Prostate gland (tissue), 2 donors: ENCODE measurements at regions of chr16 and their contacts with region 1.

Region 1: DNA sequence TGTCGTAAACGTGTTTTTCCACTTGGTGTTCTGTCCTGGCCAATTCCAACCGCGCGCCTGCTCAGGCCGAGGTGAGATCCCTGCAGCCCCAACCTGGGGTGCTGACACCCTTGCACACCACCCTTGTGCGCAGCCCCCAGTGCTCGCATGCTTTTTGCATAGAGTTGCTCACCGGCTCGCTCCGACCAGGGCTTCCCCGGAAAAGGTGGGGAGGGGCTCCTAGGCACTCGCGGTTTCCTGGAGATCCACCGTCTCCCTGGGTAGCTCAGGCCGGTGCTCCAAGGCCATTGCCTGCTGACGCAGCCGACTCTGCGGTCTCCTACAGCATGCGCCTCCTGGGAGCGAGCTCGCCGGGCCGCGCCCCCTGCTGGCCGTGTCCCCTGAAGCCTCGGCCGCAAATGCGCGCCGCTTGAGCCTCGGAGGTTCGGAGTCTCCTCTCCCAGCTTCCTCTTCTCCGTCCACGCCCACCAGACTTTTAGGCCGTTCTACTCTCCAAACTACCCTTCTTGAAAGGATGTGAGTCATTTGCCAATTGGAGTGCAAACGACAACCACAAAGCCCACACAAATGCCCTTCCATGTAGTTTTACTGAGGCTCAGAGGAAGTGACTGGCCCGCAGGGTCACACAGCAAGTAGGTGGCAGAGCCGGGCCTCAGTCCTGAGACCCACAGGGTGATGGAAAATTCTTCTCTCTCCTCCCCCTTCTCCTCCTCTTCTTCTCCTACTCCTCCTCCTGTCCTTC is 7.2 kb upstream of the PDP2 start:
- DNase-seq: peak; percentile 74
- H3K4me3 ChIP-seq: peak overlapping the region; percentile 20 to 22
- H3K27ac ChIP-seq: peak overlapping the region in 1 of 2 donors; percentile 33
- H3K4me1 ChIP-seq: no peaks in the 10 kb centered on the region
- H3K27me3 ChIP-seq: no peaks in the 10 kb centered on the region
- CTCF ChIP-seq: peak; percentile 82 to 93 (median 87)
- POLR2A ChIP-seq: no peak

Region 2: DNA sequence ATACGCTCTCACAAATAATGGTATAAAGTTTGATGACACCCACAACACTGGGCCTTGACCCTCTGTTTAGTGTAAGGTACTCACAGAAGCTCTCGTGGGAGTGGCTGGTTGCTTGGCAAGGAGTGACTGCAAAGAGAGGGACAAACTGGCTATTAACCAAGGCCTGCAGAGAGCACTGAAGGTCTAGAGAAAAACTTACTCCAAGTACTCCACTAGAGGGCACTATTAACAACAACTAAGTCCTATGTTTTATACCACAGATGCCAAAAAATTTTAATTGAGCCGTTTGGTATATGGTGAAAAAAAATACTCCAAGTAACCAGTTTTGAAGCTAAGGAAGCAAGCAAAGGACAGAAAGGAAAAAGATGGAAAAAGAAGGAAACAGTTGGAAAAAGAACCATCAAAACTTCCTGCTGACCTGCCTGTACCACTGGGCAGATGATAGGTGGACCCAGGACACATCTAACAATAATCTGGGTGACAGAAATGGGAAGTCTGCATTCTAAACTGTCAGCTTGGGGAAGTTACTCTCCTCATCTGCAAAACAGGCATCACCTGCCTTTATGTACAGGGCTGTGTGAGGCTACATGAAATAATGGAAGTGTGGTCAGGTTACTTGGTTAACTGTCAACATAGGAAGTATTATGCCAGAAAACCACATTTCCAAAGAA is 144.9 kb before region 1 on chr16:
- intact Hi-C with region 1: loop called (anchors 2 kb)
- DNase-seq: peak; percentile 39
- H3K4me3 ChIP-seq: no peak overlapping the region
- H3K27ac ChIP-seq: peak overlapping the region in 1 of 2 donors; percentile 3
- H3K4me1 ChIP-seq: no peaks in the 10 kb centered on the region
- H3K27me3 ChIP-seq: no peaks in the 10 kb centered on the region
- CTCF ChIP-seq: peak; percentile 36 to 84 (median 74)
- POLR2A ChIP-seq: no peak

Region 3: DNA sequence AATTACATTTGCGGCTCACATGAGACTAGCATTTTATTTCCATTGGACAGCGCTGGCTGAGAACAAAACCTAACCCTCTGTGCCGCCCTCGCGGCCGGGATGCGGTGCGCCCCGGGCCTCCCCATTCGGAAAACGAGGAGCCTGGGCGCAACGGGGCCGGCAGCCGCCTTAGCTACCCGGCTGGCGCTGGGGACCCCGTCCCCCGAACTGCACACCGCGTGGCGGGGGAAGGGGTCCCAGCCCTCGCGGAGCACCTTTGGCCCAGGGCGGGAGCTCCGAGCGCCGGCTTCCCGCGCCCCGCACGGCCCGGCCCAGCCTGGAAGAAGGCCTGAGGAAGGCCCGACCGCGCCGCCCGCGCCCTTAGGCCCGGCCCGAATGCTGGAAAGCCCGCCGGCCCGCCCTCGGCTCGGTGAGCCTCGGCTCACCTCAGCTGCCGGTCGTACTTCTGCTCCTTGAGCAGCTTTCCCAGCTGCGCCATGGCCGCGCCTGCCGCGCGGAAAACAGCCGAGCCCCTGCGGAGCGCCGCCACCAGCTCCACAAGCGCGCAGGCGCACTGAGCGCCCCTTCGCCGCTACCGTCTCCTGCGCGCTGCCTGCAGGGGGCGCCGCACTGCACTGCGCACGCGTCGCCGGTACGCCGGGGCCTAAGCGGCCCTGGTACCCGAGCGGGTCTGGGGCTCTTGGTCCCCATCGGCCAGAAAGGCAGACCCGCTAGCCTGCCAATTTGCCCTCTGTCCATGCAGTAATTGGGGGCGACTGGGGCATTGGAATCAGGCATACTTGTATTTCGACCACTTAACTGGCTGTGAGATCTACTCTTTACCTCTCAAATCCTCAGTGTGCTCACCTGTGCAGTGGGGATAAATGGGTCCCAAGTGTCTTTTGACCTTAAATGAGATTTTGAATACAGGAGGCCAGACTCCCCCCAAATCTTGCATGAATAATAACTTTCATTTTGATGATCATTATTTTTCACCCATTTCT is 42.4 kb before region 1 on chr16 and contains the start of gene NAE1:
- intact Hi-C with region 1: loop called (anchors 5 kb)
- DNase-seq: peak; percentile 76
- H3K4me3 ChIP-seq: peak within 1 kb of the TSS; percentile 71 to 84
- H3K27ac ChIP-seq: peak within 1 kb of the TSS; percentile 88
- H3K4me1 ChIP-seq: peaks cover 7% of the 10 kb centered on the region
- H3K27me3 ChIP-seq: no peaks in the 10 kb centered on the region
- CTCF ChIP-seq: peak; percentile 89 to 98 (median 96)
- POLR2A ChIP-seq: peak; percentile 89
- total RNA-seq, gene NAE1: 39.6 to 58.2 TPM